GM18951 (cell line): ENCODE measurements at regions of chr12 and their contacts with region 1.

Region 1: DNA sequence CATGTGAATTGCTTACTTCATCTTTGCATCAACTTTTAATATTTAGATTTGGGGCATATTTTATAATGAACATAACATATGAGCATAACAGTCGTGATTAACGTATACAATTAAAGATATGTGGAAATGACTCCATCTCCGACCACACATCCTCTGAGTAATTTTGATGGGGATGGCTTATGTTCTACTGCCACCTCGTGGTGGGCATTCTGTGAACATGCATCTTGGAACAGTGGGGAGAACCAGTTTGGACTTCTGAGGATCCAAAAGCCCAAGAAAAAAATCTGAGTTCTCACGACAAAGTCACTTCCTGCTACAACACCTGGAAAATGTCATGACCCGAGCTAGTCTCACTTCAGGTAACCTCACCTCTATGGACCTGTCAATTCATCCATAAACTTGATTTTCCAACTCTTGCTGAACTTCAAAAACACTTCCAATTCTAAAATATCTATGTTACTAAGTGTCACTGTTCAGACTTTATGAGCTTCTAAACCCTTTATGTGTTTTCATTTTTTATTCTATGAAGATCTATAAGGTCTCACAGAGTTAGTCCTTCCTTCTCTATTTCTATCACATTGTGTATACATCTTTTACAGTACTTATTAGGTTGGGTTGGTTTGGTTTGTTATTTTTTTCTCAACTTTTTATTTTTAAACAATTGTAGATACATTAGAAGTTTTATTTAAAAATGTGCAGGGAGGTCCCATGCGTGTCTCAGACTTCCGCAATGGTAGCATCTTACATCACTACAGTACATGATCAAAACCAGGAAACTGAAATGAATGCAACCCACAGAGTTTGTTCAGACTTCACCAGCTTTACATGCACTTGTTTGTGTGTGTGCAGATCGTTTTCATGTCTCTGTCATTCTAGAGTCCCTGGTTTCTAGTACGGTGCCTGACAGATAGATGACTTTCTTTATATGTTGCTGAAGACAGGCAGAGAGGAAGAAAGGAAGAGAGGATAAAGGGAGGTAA is 38.2 kb upstream of the STAB2 start:
- POLR2A ChIP-seq: no peak

Region 2: GRCh38 chr12:102883204-102883799 is 665.6 kb before region 1 on chr12:
- in situ Hi-C with region 1: loop called (anchors 10 kb)
- POLR2A ChIP-seq: no peak

Region 3: DNA sequence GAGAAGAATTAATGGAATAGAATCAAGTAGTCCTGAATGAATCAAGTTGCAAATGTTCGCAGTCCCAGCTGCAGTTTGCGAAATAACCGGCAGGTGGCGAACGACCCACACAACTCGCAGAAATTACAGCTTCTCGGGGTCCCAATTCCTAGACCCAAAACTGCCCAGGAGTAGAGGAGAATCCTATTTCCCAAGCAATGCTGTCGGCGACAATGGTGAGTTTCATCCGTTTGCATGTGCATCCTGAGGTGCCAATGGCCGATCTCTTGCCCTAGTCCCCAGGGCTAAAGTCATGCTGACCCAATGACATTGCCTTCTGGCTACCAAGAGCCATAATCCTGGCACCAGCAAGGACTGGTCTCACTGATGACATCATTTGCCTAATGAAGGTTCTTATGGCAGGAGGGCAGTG is 600.0 kb before region 1 on chr12:
- in situ Hi-C with region 1: loop called (anchors 5 kb)
- POLR2A ChIP-seq: no peak

Region 4: DNA sequence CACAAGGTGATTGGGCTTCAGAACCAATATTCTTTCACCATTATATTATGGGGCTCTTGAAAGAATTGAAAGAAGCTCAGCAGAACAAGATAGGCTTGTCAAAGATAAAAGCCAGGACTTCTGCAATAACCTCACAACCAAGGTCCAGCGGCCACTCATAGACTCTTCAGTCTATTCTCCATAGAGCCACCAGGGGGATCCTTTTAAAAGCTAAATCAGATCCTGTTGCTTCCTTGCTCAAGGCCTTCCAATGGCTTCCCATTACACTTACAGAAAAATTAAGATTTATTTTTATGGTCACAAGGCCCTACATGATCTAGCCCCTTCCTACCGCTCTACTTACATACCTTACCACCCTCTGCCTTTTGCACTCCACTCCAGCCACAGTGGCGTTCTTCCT is 222.7 kb before region 1 on chr12:
- in situ Hi-C with region 1: no loop called
- POLR2A ChIP-seq: no peak

Region 5: DNA sequence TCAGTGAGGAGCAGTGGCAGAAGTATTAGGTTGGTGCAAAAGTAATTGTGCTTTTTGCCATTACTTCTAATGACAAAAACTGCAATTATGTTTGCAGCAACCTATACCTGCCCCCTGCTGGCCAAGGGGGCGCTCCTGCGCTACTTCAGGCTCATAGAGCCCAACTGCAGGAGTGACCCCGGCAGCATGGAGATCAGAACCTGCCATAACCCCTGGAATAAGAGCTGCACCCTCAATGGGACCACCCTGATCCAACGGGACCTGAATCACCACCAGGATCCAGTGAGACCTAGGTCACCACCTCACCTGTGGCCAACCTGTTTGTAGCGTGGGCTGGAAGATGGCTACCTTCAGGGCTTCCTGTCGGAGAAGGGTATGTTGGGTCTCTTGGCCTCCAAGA is 44.9 kb before region 1 on chr12:
- in situ Hi-C with region 1: loop called (anchors 5 kb)
- POLR2A ChIP-seq: no peak